GM12878 (cell line): ENCODE measurements at regions of chr9 and their contacts with region 1.

Region 1: DNA sequence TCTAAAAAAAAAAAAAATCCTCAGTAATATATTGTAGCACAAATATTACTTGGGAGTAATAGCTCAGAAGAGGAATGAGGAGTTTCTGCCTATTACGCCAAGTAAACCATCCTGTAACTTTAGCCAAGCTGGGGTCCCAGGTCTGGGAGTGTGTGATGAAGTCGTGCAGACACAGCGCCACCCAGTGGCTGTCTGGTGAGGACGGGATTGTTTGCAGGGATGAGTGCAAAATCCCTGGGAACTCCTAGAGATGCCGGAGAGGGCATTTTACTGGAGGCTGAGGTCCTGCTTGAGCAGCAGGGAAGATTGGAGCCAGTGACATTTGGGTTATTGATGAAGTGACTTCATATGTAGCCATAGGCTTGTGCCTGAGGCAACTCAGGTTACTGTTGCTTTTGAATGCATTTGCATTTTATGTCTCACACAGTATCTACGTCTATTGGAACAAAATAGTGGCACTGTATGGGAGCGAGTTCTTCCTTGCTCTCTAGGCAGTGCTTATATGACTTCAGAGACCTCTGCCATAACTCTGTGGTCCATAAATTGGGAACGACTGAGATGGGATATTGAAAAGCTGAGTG is 72.8 kb downstream of the PSAT1 start:
- DNase-seq: no peak
- ATAC-seq: peak; percentile 91
- H3K4me3 ChIP-seq: no peak overlapping the region
- H3K27ac ChIP-seq: no peak overlapping the region
- H3K4me1 ChIP-seq: no peaks in the 10 kb centered on the region
- H3K27me3 ChIP-seq: peaks cover 0 to 2% of the 10 kb centered on the region in 2 experiments; a peak in 1 of 4 replicates
- CTCF ChIP-seq: peak; percentile 78 to 88 (median 86)
- EP300 ChIP-seq: no peak
- POLR2A ChIP-seq: no peak
- RAD21 ChIP-seq: peak; percentile 80

Region 2: GRCh38 chr9:78235756-78236538 is 133.8 kb before region 1 on chr9 and contains the start of gene CEP78:
- CTCF ChIA-PET with region 1: interaction called, 11 read pairs
- POLR2A ChIA-PET with region 1: interaction called, 3 read pairs
- RAD21 ChIA-PET with region 1: interaction called, 4 read pairs
- SMC1A ChIA-PET with region 1: no interaction called
- in situ Hi-C with region 1: no loop called
- intact Hi-C with region 1: no loop called
- DNase-seq: peak; percentile 68
- ATAC-seq: peak; percentile 97
- H3K4me3 ChIP-seq: peak within 1 kb of the TSS; percentile 69
- H3K27ac ChIP-seq: peak within 1 kb of the TSS; percentile 82
- H3K4me1 ChIP-seq: no peaks in the 10 kb centered on the region; the same call in 1 of the 2 replicates
- H3K27me3 ChIP-seq: no peaks in the 10 kb centered on the region
- CTCF ChIP-seq: no peak
- EP300 ChIP-seq: no peak
- POLR2A ChIP-seq: peak; percentile 92
- RAD21 ChIP-seq: no peak
- polyA plus RNA-seq, gene CEP78: 4.1 to 9.7 TPM

Region 3: DNA sequence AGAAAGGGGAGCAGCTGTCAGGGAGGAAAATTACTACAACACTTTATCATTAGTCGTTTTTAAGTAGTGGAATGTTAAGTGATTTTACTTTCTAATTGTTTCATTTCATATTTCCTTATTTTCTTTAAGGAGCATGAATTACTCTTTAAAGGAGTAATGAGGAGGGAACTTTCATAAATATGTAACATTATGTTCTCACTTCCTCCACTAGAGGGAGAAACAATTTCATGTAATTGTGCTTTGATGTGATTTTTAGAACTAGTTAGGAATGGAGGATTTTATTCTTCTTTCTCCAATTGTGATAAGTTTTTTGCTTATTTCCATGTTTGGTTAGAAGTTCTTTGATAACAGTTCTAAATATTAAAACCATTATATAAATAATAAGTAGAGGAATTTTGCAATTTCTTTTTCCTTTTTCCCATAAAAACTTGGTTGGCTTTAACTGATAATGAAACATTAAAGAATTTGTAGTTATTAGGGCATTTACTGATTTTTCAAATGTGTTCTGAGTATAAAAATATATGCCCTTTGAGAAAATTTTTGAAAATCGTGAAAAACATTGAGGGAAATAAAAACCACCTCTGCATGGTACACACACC is 108.2 kb before region 1 on chr9:
- CTCF ChIA-PET with region 1: interaction called, 85 read pairs
- POLR2A ChIA-PET with region 1: no interaction called
- RAD21 ChIA-PET with region 1: interaction called, 19 read pairs
- SMC1A ChIA-PET with region 1: interaction called, 26 read pairs
- in situ Hi-C with region 1: loop called (anchors 5 kb)
- intact Hi-C with region 1: loop called (anchors 1 kb)
- DNase-seq: no peak
- ATAC-seq: peak; percentile 68
- H3K4me3 ChIP-seq: no peak overlapping the region
- H3K27ac ChIP-seq: no peak overlapping the region
- H3K4me1 ChIP-seq: no peaks in the 10 kb centered on the region
- H3K27me3 ChIP-seq: no peaks in the 10 kb centered on the region
- CTCF ChIP-seq: peak; percentile 37 to 63 (median 47); a peak in 4 of 6 replicates
- EP300 ChIP-seq: no peak
- POLR2A ChIP-seq: no peak
- RAD21 ChIP-seq: peak; percentile 47; the same call in 1 of the 2 replicates

Region 4: DNA sequence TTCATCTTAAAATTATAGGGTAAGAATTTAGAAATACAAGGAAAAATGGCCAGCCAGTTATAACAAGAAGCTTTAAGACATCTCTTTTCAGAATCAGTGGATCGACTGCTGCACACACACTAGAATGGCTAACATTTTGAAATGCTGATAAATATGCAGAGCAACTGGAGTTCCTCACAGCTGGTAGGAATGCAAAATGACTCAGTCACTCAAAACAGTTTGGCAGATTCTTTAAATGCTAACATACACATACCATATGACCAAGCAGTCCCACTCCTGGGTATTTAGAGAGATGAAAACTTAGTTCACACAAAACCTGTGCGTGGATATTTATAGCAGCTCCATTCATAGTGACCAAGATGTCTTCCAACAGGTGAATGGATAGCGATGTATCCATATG is 96.0 kb before region 1 on chr9:
- CTCF ChIA-PET with region 1: interaction called, 17 read pairs
- POLR2A ChIA-PET with region 1: no interaction called
- RAD21 ChIA-PET with region 1: no interaction called
- SMC1A ChIA-PET with region 1: interaction called, 5 read pairs
- in situ Hi-C with region 1: loop called (anchors 5 kb)
- intact Hi-C with region 1: no loop called
- DNase-seq: no peak
- ATAC-seq: no peak
- H3K4me3 ChIP-seq: no peak overlapping the region
- H3K27ac ChIP-seq: no peak overlapping the region
- H3K4me1 ChIP-seq: no peaks in the 10 kb centered on the region
- H3K27me3 ChIP-seq: no peaks in the 10 kb centered on the region
- CTCF ChIP-seq: no peak
- EP300 ChIP-seq: no peak
- POLR2A ChIP-seq: no peak
- RAD21 ChIP-seq: no peak

Region 5: DNA sequence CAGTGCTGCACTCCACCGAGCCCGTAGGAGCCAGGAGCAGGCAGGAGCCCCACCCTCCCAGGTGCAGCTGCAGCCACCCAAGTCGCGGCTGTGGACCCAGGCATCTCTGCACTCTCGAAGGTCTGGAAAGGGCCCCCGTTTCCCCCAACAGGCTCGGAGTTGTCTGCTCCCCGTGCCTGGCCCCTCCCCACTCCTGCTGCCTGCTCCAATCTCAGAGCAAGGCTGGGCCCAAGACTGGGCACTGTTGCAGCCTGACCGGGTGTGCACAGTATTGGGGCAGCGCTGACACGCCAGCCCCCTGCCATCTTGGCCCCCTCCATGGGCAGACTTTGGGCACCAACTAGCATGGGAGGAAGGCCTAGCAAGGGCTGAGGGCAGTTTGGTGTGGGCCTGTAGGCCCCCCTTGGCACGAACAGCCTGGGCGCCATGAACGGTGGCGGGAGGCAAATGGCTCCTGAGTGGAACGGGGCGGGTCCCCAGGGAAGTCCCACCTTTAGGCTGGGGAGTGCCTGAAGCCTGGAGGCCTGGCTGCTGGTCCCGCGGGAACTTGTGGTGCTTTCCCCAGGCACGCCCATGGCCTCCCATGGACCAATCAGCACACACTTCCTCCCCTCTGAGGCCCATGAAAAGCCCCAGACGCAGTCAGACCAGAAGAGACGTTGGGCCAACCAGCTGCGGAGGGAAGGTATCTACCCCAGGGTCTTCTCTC is 12.4 kb before region 1 on chr9:
- CTCF ChIA-PET with region 1: interaction called, 19 read pairs
- POLR2A ChIA-PET with region 1: interaction called, 3 read pairs
- RAD21 ChIA-PET with region 1: interaction called, 4 read pairs
- SMC1A ChIA-PET with region 1: no interaction called
- in situ Hi-C with region 1: no loop called
- intact Hi-C with region 1: no loop called
- DNase-seq: no peak
- ATAC-seq: peak; percentile 94
- H3K4me3 ChIP-seq: no peak overlapping the region
- H3K27ac ChIP-seq: no peak overlapping the region
- H3K4me1 ChIP-seq: no peaks in the 10 kb centered on the region; the same call in 1 of the 2 replicates
- H3K27me3 ChIP-seq: no peaks in the 10 kb centered on the region
- CTCF ChIP-seq: no peak
- EP300 ChIP-seq: no peak
- POLR2A ChIP-seq: no peak
- RAD21 ChIP-seq: no peak